HepG2 (cell line): ENCODE measurements at regions of chr1 and their contacts with region 1.

Region 1: DNA sequence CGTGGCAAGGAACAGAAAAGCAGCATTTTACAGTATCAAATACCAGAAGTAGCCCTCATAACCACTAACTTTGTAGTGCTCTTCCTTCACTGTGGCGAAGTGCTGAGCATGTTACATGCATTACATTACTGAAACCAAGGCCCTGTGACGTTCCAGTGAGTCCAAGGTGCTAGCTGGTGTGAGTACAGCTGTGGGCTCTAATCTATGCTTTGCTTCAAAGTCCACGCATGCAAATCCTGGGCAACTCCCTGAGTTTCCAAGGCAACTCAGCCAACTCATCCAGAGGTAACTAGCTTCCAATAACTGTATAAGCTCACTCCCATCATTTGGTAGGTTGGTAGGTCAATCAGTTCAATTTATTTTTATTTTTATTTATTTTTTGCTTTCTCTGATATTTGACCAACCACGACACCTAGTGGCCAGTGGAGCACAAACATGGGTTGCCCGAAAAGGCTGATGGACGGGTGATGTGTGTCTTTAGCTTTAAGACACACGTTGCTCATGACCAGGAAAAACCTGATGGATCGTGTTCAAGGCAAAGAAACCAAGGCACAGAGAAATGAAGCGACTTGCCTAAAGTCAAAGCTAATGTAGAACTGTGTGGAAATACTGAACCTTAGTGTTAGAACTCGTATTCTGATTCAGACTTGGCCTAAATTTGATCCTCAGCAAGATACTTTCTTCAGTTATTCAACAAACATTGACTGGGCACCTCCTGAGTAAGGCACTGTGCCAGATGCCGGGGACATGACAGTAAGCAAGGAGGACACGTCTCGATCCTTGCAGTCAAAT is 73.0 kb downstream of the GNG12 start:
- DNase-seq: peak; percentile 87
- ATAC-seq: peak; percentile 99
- H3K4me3 ChIP-seq: peak overlapping the region in 1 of 3 experiments; percentile 7; a peak in 1 of 6 replicates
- H3K27ac ChIP-seq: peak overlapping the region; percentile 42
- H3K4me1 ChIP-seq: peaks cover 30% of the 10 kb centered on the region
- H3K27me3 ChIP-seq: peaks cover 2% of the 10 kb centered on the region in 2 experiments; a peak in 2 of 5 replicates
- CTCF ChIP-seq: peak; percentile 72
- EP300 ChIP-seq: peak; percentile 29 to 46; a peak in 1 of 4 replicates
- POLR2A ChIP-seq: no peak
- RAD21 ChIP-seq: peak; percentile 79; the same call in 1 of the 2 replicates

Region 2: DNA sequence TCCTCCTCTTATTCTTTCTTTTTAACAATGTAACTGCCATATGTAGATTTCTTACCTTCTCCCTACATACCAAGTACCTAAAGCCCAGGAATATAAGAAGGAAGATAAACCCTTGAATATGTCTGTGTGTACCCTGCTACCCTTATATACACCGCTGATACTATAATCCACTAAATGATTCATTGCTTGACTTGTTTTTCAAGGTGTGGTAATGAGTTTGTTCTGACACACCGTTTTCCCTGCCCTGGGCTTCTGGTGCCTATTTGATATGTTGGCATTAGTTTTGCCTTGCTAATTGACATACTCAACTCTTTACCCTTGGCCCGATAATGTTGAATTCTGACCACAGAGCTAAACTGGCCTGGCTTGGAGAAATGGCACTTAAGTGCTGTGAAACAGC is 529.7 kb before region 1 on chr1:
- CTCF ChIA-PET with region 1: no interaction called
- POLR2A ChIA-PET with region 1: no interaction called
- in situ Hi-C with region 1: no loop called
- intact Hi-C with region 1: loop called (anchors 10 kb)
- DNase-seq: no peak
- ATAC-seq: no peak
- H3K4me3 ChIP-seq: no peak overlapping the region
- H3K27ac ChIP-seq: no peak overlapping the region
- H3K4me1 ChIP-seq: no peaks in the 10 kb centered on the region
- H3K27me3 ChIP-seq: no peaks in the 10 kb centered on the region; a peak in 1 of 5 replicates
- CTCF ChIP-seq: no peak
- EP300 ChIP-seq: no peak
- POLR2A ChIP-seq: no peak
- RAD21 ChIP-seq: no peak

Region 3: DNA sequence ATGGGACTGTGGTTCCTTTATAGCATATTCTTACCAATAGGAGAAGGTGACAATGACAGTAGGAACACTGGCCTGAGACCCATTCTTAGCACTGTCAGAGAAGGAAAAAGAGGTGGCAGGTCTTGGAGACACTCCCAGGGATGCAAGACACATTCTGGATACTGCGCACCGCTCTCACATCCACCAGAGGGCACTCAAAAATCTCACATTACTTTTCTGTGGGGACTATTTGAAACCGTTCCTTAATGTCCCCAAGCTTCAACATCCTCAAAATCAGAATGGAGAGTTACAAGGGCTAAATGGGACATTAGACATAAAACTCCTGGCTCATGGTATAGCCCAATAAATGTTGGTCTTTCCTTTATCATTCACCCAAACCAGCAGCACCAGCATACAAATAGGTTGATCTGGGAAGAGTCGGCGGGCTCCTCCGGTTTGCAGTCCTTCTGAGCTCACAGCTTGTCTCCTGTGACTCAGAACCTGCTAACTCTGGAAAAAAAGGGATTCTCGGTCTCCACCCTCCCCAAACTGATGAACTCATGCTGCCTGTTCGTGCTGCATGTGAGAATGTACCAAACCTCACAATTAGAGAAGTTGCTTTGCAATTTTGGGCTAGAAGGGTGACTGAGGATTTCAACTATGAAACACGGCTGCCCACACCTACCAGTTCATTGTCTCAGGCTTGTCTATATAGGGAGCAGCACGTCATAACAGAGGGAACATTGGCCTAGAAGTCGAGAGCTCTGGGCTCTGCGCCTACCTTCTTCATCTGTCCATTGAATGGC is 412.3 kb before region 1 on chr1:
- CTCF ChIA-PET with region 1: no interaction called
- POLR2A ChIA-PET with region 1: no interaction called
- in situ Hi-C with region 1: no loop called
- intact Hi-C with region 1: loop called (anchors 5 kb)
- DNase-seq: peak; percentile 24
- ATAC-seq: peak; percentile 90
- H3K4me3 ChIP-seq: no peak overlapping the region
- H3K27ac ChIP-seq: no peak overlapping the region
- H3K4me1 ChIP-seq: no peaks in the 10 kb centered on the region
- H3K27me3 ChIP-seq: no peaks in the 10 kb centered on the region
- CTCF ChIP-seq: peak; percentile 79
- EP300 ChIP-seq: no peak
- POLR2A ChIP-seq: no peak
- RAD21 ChIP-seq: peak; percentile 45; the same call in 1 of the 2 replicates

Region 4: DNA sequence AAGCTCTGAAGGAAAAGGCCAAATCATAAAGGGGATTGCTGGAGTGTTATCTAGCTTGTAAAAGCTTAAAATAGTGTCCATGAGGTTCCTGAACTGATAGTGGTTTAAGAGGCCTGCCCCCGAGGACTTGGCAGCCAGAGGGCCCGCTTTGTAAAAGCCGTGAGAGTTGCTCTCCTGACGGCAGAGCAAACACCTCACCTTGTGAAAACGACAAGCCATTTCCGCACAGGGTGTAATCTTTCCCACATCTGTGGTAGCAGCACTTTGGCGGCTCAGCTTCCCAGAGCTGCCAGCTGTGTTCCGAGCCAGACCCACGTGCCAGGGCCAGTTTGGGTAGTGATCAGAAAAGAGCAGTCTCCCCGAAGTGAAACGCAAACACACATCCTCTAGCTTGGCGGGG is 367.0 kb before region 1 on chr1:
- CTCF ChIA-PET with region 1: no interaction called
- POLR2A ChIA-PET with region 1: no interaction called
- in situ Hi-C with region 1: no loop called
- intact Hi-C with region 1: no loop called
- DNase-seq: no peak
- ATAC-seq: peak; percentile 19; the same call in 1 of the 3 replicates
- H3K4me3 ChIP-seq: no peak overlapping the region
- H3K27ac ChIP-seq: no peak overlapping the region
- H3K4me1 ChIP-seq: no peaks in the 10 kb centered on the region
- H3K27me3 ChIP-seq: no peaks in the 10 kb centered on the region
- CTCF ChIP-seq: no peak
- EP300 ChIP-seq: no peak
- POLR2A ChIP-seq: no peak
- RAD21 ChIP-seq: no peak

Region 5: GRCh38 chr1:67468066-67468718 is 292.0 kb before region 1 on chr1:
- CTCF ChIA-PET with region 1: no interaction called
- POLR2A ChIA-PET with region 1: no interaction called
- in situ Hi-C with region 1: no loop called
- intact Hi-C with region 1: no loop called
- DNase-seq: no peak
- ATAC-seq: no peak
- H3K4me3 ChIP-seq: no peak overlapping the region
- H3K27ac ChIP-seq: no peak overlapping the region
- H3K4me1 ChIP-seq: no peaks in the 10 kb centered on the region
- H3K27me3 ChIP-seq: peaks cover 0 to 15% of the 10 kb centered on the region in 2 experiments; a peak in 2 of 5 replicates
- CTCF ChIP-seq: no peak
- EP300 ChIP-seq: no peak
- POLR2A ChIP-seq: no peak
- RAD21 ChIP-seq: no peak

Region 6: GRCh38 chr1:67561704-67562113 is 198.5 kb before region 1 on chr1:
- CTCF ChIA-PET with region 1: interaction called, 28 read pairs
- POLR2A ChIA-PET with region 1: interaction called, 6 read pairs
- in situ Hi-C with region 1: loop called (anchors 5 kb)
- intact Hi-C with region 1: loop called (anchors 1 kb)
- DNase-seq: peak; percentile 74
- ATAC-seq: peak; percentile 90
- H3K4me3 ChIP-seq: no peak overlapping the region
- H3K27ac ChIP-seq: no peak overlapping the region
- H3K4me1 ChIP-seq: peaks cover 52% of the 10 kb centered on the region
- H3K27me3 ChIP-seq: 0 out of 5 replicates have a peak, but pooled peaks cover 0 to 6% of the 10 kb centered on the region in 2 experiments
- CTCF ChIP-seq: peak; percentile 88
- EP300 ChIP-seq: no peak
- POLR2A ChIP-seq: no peak
- RAD21 ChIP-seq: peak; percentile 91

Region 7: DNA sequence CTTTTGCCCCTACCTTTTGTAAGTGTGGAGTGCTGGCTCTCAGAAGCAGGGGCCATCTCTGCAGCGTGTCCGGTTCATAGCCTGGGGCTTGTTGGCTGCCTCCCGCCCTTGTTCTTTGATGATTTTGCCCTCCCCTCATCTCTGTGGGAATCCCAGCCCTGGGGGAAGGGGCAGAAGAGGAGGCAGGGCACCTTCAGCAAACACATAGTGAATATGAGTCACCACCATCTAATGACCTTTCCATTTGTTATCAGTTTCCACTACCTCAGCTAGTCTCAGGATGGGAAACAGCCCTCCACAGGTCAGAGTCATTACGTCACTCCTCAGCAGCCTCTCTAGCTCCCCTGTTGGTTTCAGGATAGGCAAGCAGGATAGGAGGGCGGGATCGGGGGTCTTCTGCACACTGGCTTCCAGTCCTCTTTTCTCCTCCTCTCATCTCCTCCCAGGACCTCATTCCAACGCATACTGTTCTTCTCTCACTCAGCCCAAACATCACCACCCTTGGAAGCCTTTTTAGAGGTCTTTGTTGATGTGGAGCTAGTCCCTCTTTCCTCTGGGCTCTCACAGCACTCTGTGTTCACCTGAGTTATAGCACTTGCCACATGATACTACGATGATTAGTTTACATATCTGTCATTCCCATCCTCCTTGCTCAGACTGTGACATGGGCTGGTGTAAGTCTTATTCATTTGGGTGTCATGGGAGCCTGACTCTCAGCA is 59.4 kb before region 1 on chr1:
- CTCF ChIA-PET with region 1: interaction called, 3 read pairs
- POLR2A ChIA-PET with region 1: no interaction called
- in situ Hi-C with region 1: no loop called
- intact Hi-C with region 1: loop called (anchors 2 kb)
- DNase-seq: peak; percentile 98
- ATAC-seq: peak; percentile 89
- H3K4me3 ChIP-seq: peak overlapping the region; percentile 14 to 41 (median 28); a peak in 5 of 6 replicates
- H3K27ac ChIP-seq: peak overlapping the region; percentile 61
- H3K4me1 ChIP-seq: peaks cover 60% of the 10 kb centered on the region
- H3K27me3 ChIP-seq: 0 out of 5 replicates have a peak, but pooled peaks cover 0 to 5% of the 10 kb centered on the region in 2 experiments
- CTCF ChIP-seq: peak; percentile 61
- EP300 ChIP-seq: peak; percentile 77 to 85; a peak in 2 of 4 replicates
- POLR2A ChIP-seq: peak in 1 of 2 experiments; percentile 23; a peak in 1 of 4 replicates
- RAD21 ChIP-seq: no peak

Region 8: GRCh38 chr1:67791686-67792475 is 31.7 kb after region 1 on chr1:
- CTCF ChIA-PET with region 1: no interaction called
- POLR2A ChIA-PET with region 1: no interaction called
- in situ Hi-C with region 1: no loop called
- intact Hi-C with region 1: no loop called
- DNase-seq: no peak
- ATAC-seq: no peak
- H3K4me3 ChIP-seq: no peak overlapping the region
- H3K27ac ChIP-seq: no peak overlapping the region
- H3K4me1 ChIP-seq: no peaks in the 10 kb centered on the region
- H3K27me3 ChIP-seq: peaks cover 0 to 3% of the 10 kb centered on the region in 2 experiments; a peak in 1 of 5 replicates
- CTCF ChIP-seq: no peak
- EP300 ChIP-seq: no peak
- POLR2A ChIP-seq: no peak
- RAD21 ChIP-seq: no peak

Region 9: GRCh38 chr1:68028566-68028965 is 268.3 kb after region 1 on chr1:
- CTCF ChIA-PET with region 1: no interaction called
- POLR2A ChIA-PET with region 1: no interaction called
- in situ Hi-C with region 1: no loop called
- intact Hi-C with region 1: no loop called
- DNase-seq: no peak
- ATAC-seq: no peak
- H3K4me3 ChIP-seq: no peak overlapping the region
- H3K27ac ChIP-seq: no peak overlapping the region
- H3K4me1 ChIP-seq: no peaks in the 10 kb centered on the region
- H3K27me3 ChIP-seq: no peaks in the 10 kb centered on the region
- CTCF ChIP-seq: no peak
- EP300 ChIP-seq: no peak
- POLR2A ChIP-seq: no peak
- RAD21 ChIP-seq: no peak